ENCODE measurements at regions of chr4 and their contacts with region 1.

Region 1: DNA sequence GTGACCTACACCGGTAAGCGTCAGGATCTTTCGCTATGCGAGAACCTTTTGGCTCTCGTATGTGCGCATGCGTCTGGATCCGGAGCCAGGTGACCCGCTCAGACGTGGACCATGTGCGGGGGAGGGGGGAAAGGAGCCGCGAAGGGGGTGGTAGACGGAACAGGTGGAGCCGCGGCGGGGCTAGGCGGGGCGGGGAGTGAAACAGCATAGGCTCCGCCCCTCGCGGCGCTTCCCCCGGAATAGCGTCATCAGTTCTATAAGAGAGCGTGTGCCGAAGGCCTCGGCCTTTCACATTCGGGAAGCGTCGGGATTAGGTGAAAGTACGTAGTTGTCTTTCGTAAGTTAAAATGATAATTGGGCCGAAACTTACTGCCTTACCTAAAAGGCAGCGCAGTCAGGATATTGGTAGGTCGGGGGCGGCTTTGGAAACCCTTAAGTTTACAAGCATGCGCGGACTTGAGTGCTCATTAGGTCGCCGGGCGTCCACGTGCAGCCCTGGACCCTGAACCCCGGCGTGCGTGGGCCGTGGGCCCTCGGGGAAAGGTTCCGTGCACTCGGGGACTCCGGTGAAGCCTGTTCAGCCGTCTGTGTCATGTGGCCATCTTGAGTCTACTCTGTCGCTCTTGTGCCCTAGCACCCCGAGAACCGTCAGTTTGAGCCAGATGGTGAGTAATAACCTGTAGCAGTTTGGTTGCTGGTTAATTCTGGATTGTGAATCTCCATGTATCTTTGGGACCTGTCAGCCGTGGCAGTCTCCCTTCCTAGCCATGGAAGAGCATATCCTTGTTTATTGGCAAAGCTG is 74.1 kb downstream of the PRSS12 start:
- DNase-seq: peak; percentile 99
- ATAC-seq: peak; percentile 96
- H3K4me3 Mint-ChIP-seq: peak overlapping the region; percentile 96
- H3K27ac Mint-ChIP-seq: peak overlapping the region; percentile 99
- H3K4me1 Mint-ChIP-seq: peaks cover 37% of the 10 kb centered on the region
- H3K27me3 Mint-ChIP-seq: no peaks in the 10 kb centered on the region

Region 2: GRCh38 chr4:118352843-118353533 is 74.3 kb after region 1 on chr4 and contains the start of gene PRSS12:
- CTCF ChIA-PET with region 1: interaction called, 8 read pairs
- POLR2A ChIA-PET with region 1: no interaction called
- intact Hi-C with region 1: loop called (anchors 1 to 2 kb)
- DNase-seq: peak; percentile 82
- ATAC-seq: peak; percentile 94
- H3K4me3 Mint-ChIP-seq: peak within 1 kb of the TSS; percentile 62
- H3K27ac Mint-ChIP-seq: no peak within 1 kb of the TSS
- H3K4me1 Mint-ChIP-seq: peaks cover 12% of the 10 kb centered on the region
- H3K27me3 Mint-ChIP-seq: peaks cover 60% of the 10 kb centered on the region
- total RNA-seq, gene PRSS12: not detected

Region 3: DNA sequence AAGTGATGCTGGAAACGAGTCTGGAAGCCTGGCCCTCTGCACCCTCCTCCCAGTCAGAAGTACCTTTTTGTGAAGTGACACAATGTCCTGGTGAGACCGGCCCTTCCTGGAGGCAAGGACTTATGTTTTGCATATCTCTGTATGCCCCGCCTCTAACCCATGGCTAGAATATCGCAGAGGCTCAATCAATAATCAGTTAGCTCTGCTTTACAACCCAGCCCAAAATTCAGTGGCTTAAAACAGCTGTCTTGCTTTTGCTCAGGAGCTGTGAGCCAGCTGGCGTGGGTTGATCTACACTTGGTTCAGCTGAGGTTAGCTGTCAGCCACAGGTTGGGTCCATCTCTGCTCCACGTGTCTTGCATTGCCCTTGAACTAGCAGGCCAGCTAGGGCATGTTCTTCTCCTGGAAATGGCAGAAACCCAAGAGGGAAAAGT is 307.7 kb after region 1 on chr4:
- CTCF ChIA-PET with region 1: no interaction called
- POLR2A ChIA-PET with region 1: no interaction called
- intact Hi-C with region 1: loop called in 1 of 2 experiments (anchors 1 kb)
- DNase-seq: no peak
- ATAC-seq: no peak
- H3K4me3 Mint-ChIP-seq: no peak overlapping the region
- H3K27ac Mint-ChIP-seq: no peak overlapping the region
- H3K4me1 Mint-ChIP-seq: peaks cover 9% of the 10 kb centered on the region
- H3K27me3 Mint-ChIP-seq: peaks cover 16% of the 10 kb centered on the region